ENCODE measurements at regions of chr3 and their contacts with region 1.

Region 1: DNA sequence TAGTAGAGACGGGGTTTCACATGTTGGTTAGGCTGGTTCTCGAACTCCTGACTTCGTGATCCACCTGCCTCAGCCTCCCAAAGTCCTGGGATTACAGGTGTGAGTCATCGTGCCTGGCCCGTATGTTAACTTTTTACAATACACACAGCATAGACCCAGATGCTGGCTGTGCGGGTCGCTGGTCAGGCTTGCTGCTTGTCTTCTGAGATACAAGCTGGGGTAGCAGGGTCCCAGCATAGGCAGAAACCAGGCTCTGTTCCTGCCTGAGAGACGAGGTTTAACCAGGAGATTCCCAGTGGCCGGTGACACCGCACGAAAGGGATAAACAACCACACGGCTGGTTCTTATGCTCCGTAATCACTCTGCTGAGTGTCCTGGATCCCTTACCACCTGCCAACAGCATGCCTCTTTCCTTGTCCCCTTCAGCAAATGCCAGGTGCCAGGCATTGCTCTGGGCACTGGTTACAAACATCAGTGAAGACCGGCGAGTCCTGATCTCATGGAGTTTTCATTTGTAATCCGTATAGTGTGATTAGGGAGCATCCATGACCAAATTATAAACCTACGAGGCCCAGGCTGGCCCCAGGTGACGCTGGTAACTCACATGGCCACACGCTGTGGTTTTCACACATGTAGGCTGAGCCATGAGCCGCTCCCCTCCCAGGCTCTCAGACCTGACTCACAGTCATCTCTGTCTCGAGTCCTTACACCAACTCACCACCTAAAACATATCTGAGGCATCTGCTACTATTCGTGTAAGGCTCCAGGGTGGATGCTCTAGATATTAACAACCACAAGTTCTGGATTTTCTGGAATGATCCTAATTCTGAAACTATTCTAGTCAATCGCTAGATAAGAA is 125.7 kb downstream of the PDZRN3 start:
- DNase-seq: no peak
- ATAC-seq: no peak

Region 2: DNA sequence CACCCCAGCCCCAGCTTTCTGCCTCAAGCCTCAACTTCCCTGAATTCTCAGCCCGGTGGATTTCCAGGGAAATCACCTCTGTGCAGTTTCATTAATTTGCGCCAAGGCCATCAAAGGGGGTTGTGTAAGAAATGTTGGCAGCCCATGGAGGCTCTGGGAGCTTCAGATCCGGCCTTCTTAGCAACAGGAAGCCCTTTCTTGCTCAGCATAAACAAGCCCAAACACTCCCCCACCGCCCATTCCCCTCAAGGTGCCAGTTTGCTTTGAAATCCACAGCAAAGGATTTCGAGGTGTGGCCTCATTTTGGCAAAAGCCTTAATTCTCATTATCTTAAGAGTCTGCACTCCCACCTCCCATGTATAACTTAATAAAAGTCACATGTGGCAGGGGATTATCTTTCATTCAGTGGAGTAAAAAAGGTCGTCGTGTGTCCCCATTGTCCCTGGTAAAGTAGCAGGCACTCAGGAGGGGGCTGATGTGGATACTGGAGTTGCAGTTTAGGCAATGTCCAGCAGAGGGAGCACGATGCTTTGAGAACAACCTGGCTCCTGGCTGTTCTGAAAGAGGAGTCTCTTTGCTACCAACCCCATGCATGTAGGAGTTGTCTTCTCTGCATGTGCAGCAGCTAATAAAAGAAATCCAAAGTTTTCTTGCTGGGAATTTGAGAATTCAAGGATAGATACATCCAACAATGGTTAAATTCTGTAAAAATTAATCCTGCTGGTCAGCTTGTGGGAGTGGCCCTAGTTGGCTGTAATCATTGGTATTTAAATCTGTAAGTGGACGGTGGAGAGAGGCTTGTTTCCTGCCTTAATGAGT is 398.0 kb before region 1 on chr3:
- intact Hi-C with region 1: loop called (anchors 5 kb)
- DNase-seq: peak; percentile 95
- ATAC-seq: peak; percentile 92

Measured in sciatic nerve (tissue), 2 donors.